OCI-LY7 (cell line): ENCODE measurements at regions of chr1 and their contacts with region 1.

Region 1: DNA sequence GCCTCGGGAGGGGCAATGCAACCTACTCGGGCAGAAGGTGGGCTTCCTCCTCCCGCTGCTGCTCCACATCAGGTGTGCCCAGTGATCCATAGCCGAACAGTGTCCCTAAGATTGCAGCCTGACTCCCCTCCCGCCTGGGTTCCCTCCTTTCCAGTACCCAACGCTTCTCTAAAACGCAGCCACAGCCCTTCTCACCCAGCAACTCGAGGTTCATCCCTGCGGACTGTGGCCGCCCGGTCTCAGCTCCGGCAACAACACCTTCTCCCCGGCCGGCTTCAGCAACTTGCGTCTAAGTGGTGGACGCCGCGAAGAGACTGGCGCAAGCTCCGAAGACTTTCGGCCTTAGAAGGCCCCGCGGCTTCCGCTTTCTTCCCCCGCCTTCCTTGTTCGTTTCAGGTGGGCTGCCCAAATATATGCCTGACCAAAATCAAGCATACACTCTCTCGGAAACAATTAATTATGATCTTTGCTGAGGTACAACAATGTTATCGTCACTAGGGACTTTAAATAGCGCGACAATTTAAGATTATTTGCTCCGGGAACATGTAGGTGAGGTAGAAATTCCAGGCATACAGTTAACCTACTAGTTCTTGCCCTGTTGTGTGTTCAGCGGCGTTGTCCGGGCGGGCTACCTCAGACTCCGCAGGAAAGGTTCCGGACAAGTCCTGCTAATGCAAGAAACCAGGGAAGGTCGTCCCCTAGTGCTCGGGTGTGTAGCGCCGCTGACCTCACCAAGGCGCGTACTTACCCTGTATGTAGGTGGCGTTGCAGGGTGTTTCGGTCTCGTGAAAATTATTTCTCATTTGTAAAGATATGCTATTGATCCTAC is at the start of gene RBBP5:
- DNase-seq: peak; percentile 99
- H3K4me3 ChIP-seq: peak within 1 kb of the TSS; percentile 91
- H3K27ac ChIP-seq: peak within 1 kb of the TSS; percentile 70
- H3K4me1 ChIP-seq: peaks cover 31% of the 10 kb centered on the region
- CTCF ChIP-seq: peak; percentile 83
- total RNA-seq, gene RBBP5: 11.9 and 14.7 TPM in 2 replicates

Region 2: GRCh38 chr1:203326830-203327683 is 1794.8 kb before region 1 on chr1:
- CTCF ChIA-PET with region 1: no interaction called
- POLR2A ChIA-PET with region 1: no interaction called
- intact Hi-C with region 1: loop called (anchors 5 kb)
- DNase-seq: peak; percentile 96
- H3K4me3 ChIP-seq: peak overlapping the region; percentile 67
- H3K27ac ChIP-seq: peak overlapping the region; percentile 98
- H3K4me1 ChIP-seq: peaks cover 90% of the 10 kb centered on the region
- CTCF ChIP-seq: no peak

Region 3: GRCh38 chr1:204714861-204715511 is 406.9 kb before region 1 on chr1:
- CTCF ChIA-PET with region 1: no interaction called
- POLR2A ChIA-PET with region 1: no interaction called
- intact Hi-C with region 1: no loop called
- DNase-seq: peak; percentile 65
- H3K4me3 ChIP-seq: peak overlapping the region; percentile 62
- H3K27ac ChIP-seq: peak overlapping the region; percentile 62
- H3K4me1 ChIP-seq: peaks cover 72% of the 10 kb centered on the region
- CTCF ChIP-seq: peak; percentile 73

Region 4: GRCh38 chr1:205077158-205077933 is 44.5 kb before region 1 on chr1:
- CTCF ChIA-PET with region 1: no interaction called
- POLR2A ChIA-PET with region 1: interaction called, 10 read pairs
- intact Hi-C with region 1: no loop called
- DNase-seq: no peak
- H3K4me3 ChIP-seq: no peak overlapping the region
- H3K27ac ChIP-seq: no peak overlapping the region
- H3K4me1 ChIP-seq: no peaks in the 10 kb centered on the region
- CTCF ChIP-seq: no peak

Region 5: DNA sequence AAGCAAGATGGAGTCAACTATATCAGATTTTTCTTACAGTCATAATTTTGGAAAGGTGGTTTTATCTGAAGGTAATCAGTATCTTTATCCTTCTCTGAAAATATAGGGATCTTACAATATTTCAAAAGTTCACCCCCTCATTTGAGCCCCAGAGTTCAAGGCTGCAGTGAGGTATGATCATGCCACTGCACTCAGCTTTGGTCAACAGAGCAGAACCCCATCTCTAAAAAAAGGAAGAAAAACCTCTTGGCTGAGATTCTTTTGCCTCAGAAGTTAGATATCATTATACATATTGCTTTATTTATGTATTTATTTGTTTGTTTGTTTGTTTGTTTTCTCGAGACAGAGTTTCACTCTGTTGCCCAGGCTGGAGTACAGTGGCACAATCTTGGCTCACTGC is 11.4 kb after region 1 on chr1:
- CTCF ChIA-PET with region 1: no interaction called
- POLR2A ChIA-PET with region 1: interaction called, 13 read pairs
- intact Hi-C with region 1: no loop called
- DNase-seq: no peak
- H3K4me3 ChIP-seq: no peak overlapping the region
- H3K27ac ChIP-seq: no peak overlapping the region
- H3K4me1 ChIP-seq: peaks cover 3% of the 10 kb centered on the region
- CTCF ChIP-seq: no peak

Region 6: DNA sequence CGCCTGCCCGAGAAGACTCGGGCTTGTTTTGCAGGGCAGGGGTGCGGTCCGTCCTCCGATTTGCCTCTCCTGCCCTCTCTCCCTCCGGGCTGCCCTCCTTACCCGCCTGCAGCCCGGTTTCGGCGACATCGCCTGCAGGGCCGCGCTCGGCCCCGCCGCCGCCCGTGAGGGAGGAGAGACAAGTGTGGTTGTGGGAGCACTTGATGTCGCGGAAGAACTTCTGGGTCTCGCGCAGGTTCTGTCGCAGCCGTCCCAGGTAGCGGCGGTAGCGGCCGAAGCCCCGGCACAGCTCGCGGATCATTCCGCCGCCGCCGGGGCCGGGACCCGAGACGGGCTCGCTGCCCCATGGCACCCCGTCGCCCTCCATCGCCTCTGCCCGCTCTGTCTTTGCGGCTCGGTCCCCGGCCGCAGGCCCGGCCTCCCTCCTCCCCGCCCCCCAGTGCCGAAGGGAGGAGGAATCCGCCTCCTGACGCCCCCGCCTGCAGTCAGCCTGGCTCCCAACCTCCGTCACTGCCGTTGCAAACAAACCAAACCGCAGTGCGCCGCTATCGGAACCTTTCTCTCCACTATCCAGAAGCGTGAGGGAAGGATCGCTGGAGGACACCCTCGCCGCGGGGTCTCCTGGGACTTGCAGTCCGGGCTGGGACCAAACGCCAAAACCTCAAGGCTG is 89.4 kb after region 1 on chr1 and contains the start of gene DSTYK:
- CTCF ChIA-PET with region 1: no interaction called
- POLR2A ChIA-PET with region 1: interaction called, 3 read pairs
- intact Hi-C with region 1: loop called (anchors 1 kb)
- DNase-seq: peak; percentile 97
- H3K4me3 ChIP-seq: peak within 1 kb of the TSS; percentile 95
- H3K27ac ChIP-seq: peak within 1 kb of the TSS; percentile 62
- H3K4me1 ChIP-seq: peaks cover 21% of the 10 kb centered on the region
- CTCF ChIP-seq: no peak
- total RNA-seq, gene DSTYK: 4.7 and 5.0 TPM in 2 replicates

Region 7: DNA sequence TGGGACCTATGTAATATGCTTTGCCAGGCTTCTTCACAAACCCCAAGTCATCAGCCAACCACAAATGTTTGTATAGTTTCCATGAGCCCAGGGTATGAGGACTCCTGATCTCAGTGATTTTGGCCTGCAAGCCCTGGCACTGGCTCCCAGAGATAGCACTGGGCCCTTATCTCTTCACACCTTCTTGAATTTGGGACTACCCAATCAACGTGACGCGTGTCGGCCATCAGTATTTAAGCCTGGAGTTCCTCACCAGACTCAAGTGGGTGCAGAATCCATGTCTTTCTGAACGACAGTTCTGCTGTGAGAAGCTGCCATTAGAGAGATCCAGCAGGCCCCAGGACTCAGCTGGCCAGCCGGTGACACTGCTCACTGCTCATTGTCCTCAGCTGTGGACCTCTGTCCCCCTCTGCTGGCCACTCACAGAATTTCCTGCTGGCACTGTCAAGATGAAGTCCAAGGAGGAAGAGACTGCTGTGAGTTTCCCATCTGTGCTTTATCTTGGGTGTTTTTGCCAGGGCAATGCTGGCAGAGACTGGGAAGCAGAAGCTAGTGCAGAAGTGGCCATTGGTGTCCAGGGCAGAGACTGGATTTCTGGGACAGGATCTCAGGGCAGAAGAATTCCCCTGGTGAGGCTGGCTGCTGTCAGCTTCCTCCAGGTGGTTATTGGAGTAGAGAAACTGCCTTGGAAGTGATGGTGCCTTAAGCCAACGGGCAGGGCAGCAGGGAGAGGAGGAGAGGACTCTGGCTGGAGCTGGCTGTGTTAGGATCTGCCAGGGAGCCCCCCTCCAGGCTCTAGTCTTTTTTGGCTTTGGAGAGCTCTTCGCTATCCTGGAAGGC is 134.3 kb after region 1 on chr1:
- CTCF ChIA-PET with region 1: interaction called, 4 read pairs
- POLR2A ChIA-PET with region 1: no interaction called
- intact Hi-C with region 1: loop called (anchors 5 kb)
- DNase-seq: peak; percentile 74
- H3K4me3 ChIP-seq: no peak overlapping the region
- H3K27ac ChIP-seq: no peak overlapping the region
- H3K4me1 ChIP-seq: peaks cover 39% of the 10 kb centered on the region
- CTCF ChIP-seq: peak; percentile 88